Panc1 (cell line): ENCODE measurements at regions of chr12 and their contacts with region 1.

Region 1: DNA sequence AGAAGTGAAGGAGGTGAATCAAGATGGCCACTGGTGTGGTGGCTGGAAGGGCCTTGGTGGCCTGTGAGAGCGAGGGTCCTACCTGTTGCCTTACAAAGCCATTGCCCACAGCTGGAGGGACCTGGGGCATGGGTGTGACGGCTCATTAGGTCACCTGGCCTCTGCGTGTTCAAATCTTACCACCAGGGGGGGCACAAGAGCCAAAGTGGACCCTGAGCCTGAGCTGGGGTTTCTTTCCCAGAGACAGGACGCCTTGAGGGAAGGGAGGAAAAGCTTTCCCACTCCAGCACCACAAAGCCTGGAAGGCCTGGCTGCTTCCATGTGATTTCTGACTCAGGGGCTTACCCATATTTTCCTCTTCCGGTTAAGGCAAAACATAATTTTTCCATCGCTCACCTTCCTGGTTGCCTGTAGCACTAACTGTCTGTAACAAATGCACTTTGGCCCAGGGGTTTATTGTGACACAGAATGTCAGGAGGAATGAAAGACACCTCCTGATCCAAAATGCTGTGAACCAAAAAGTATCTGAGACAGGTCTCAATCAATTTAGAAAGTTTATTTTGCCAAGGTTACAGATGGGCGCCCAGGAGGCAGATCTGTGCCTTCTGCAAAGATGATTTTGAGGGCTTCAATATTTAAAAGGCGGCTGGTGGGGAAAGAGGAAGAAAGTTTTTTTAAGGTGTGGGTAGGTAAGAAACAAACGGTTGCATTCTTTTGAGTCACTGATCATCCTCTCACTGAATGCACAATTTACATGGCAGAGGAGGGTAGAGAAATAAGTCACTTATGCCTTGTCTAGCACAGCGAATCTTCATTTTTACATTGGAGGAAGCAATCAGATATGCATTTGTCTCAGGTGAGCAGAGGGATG is 4.3 kb upstream of the CD9 start:
- DNase-seq: peak; percentile 87
- ATAC-seq: peak; percentile 85
- H3K4me3 ChIP-seq: no peak overlapping the region
- H3K27ac ChIP-seq: peak overlapping the region; percentile 61
- H3K4me1 ChIP-seq: peaks cover 7% of the 10 kb centered on the region
- H3K27me3 ChIP-seq: no peaks in the 10 kb centered on the region
- CTCF ChIP-seq: peak; percentile 88

Region 2: DNA sequence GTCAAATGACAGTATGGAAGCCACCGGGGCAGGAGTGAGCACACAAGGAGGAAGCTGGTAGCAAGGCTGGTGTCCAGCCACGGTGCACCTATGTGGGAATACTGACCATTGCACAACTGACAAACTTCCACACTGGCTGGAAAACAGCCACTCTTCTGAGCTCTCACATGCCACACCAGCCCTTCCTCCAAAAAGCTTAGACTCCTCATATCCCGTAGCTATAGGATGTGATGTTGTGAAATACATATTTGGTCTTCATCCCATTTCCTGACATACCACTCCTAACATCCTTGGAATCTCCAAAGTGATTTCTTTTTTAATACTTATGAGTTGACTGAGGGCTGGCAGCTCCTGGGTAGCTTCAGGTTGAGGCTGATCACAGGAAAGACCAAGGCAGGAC is 660.4 kb before region 1 on chr12:
- CTCF ChIA-PET with region 1: no interaction called
- POLR2A ChIA-PET with region 1: no interaction called
- in situ Hi-C with region 1: no loop called
- intact Hi-C with region 1: no loop called
- DNase-seq: no peak
- ATAC-seq: no peak
- H3K4me3 ChIP-seq: no peak overlapping the region
- H3K27ac ChIP-seq: no peak overlapping the region
- H3K4me1 ChIP-seq: no peaks in the 10 kb centered on the region
- H3K27me3 ChIP-seq: no peaks in the 10 kb centered on the region; the same call in 1 of the 2 replicates
- CTCF ChIP-seq: no peak

Region 3: GRCh38 chr12:6211421-6211869 is 15.5 kb after region 1 on chr12:
- CTCF ChIA-PET with region 1: interaction called, 11 read pairs
- POLR2A ChIA-PET with region 1: interaction called, 4 read pairs
- in situ Hi-C with region 1: no loop called
- intact Hi-C with region 1: no loop called
- DNase-seq: no peak
- ATAC-seq: no peak
- H3K4me3 ChIP-seq: no peak overlapping the region
- H3K27ac ChIP-seq: no peak overlapping the region
- H3K4me1 ChIP-seq: peaks cover 27% of the 10 kb centered on the region
- H3K27me3 ChIP-seq: no peaks in the 10 kb centered on the region
- CTCF ChIP-seq: no peak

Region 4: DNA sequence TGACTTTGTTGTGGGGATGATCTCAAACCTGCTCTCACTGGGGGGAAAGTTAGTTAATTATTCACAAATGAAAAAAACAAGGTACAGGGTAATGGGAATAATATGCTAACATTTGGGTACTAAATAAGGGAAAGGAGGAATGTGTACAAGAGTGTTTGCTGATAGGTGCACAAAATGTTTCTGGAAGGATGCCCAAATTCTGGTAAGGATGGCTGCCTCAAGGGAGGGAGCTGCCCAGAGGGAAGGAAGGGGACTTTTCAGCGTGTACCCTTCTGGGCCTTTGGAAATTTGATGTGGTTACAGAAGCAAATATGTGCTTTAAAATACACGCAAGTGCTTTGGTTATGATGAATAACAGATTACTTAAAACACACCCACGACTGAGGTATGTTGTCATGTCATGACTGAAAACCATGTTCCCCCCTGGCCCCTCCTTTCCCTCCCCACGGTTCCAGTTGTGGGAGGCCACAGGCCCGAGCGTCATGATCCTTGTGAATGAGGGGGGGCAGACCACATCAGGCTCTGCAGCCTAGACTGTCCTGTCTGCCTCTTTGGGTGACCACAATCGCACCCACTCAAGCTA is 71.3 kb after region 1 on chr12:
- CTCF ChIA-PET with region 1: no interaction called
- POLR2A ChIA-PET with region 1: interaction called, 17 read pairs
- in situ Hi-C with region 1: no loop called
- intact Hi-C with region 1: no loop called
- DNase-seq: no peak
- ATAC-seq: no peak
- H3K4me3 ChIP-seq: no peak overlapping the region
- H3K27ac ChIP-seq: no peak overlapping the region
- H3K4me1 ChIP-seq: no peaks in the 10 kb centered on the region
- H3K27me3 ChIP-seq: no peaks in the 10 kb centered on the region
- CTCF ChIP-seq: no peak

Region 5: DNA sequence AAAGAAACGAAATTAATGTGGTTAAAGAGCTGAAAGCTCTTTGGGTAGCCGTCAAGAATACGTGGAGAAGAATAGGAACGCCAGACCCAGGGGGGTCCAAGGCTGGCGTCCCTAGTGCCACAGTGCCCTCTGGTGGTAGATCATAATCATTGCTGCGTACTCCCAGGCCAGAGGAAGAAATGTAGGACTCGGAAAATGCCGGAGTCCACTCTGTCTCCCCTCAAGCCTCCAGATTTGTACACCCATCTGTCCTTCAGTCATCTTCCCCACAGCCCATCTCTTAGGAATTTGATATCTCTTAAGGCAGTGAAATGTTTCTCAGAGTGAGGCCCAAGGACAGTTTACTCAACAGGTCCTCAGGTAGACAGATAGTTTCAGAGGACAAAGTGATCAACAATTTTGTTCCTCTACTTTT is 89.2 kb after region 1 on chr12:
- CTCF ChIA-PET with region 1: interaction called, 11 read pairs
- POLR2A ChIA-PET with region 1: no interaction called
- in situ Hi-C with region 1: no loop called
- intact Hi-C with region 1: loop called (anchors 2 kb)
- DNase-seq: no peak
- ATAC-seq: peak; percentile 79
- H3K4me3 ChIP-seq: no peak overlapping the region
- H3K27ac ChIP-seq: peak overlapping the region; percentile 63; the same call in 1 of the 2 replicates
- H3K4me1 ChIP-seq: peaks cover 11% of the 10 kb centered on the region
- H3K27me3 ChIP-seq: no peaks in the 10 kb centered on the region
- CTCF ChIP-seq: peak; percentile 87